Endothelial cell of umbilical vein (primary cell): ENCODE measurements at regions of chr1 and their contacts with region 1.

Region 1: DNA sequence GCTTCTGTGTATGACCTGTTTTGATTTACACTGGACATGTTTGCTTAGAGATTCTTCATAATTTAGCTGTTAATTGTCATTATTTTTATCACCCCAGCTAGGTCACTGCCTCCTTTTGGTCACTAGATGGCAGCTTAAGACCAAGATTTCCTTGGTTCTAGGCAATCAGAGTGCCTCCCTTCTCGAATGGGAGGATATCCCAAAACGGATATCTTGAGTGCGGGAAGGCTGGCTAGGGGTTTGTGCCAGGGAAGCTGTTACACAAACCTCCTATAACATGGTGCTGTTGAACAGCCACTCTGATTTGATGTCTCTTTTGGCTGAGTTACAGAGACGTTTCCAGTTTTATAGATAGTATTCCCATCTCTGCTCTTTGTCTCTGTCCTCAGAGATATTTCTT is 283.5 kb downstream of the S1PR1 start:
- DNase-seq: peak; percentile 57
- H3K4me3 ChIP-seq: no peak overlapping the region
- H3K27ac ChIP-seq: no peak overlapping the region
- H3K4me1 ChIP-seq: no peaks in the 10 kb centered on the region
- H3K27me3 ChIP-seq: peaks cover 2 to 3% of the 10 kb centered on the region in 2 experiments
- CTCF ChIP-seq: peak; percentile 62 to 71
- POLR2A ChIP-seq: no peak

Region 2: DNA sequence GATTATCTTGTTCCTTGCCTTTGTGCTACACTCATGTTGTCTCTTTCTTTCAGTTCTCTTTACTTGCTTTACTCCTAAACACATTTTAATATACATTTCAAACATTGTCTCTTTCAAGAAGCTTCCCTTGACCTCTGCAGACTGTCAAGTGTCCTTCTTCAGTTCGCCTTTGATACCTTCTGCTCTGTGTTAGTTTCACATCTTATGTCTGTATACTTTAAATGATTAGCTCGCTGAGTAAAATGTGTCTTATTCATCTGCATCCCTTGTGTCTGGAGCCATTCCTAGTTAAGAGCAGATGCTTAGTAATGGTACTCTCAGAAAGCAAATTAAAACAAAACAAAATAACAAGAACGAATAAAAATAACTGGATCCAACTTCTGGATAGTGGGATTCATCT is 19.9 kb after region 1 on chr1:
- CTCF ChIA-PET with region 1: interaction called, 14 read pairs
- POLR2A ChIA-PET with region 1: no interaction called
- dilution Hi-C with region 1: no loop called
- intact Hi-C with region 1: no loop called
- DNase-seq: no peak
- H3K4me3 ChIP-seq: no peak overlapping the region
- H3K27ac ChIP-seq: no peak overlapping the region
- H3K4me1 ChIP-seq: no peaks in the 10 kb centered on the region
- H3K27me3 ChIP-seq: peaks cover 3 to 4% of the 10 kb centered on the region in 2 experiments
- CTCF ChIP-seq: no peak
- POLR2A ChIP-seq: no peak

Region 3: GRCh38 chr1:101769520-101769919 is 249.2 kb after region 1 on chr1:
- CTCF ChIA-PET with region 1: interaction called, 3 read pairs
- POLR2A ChIA-PET with region 1: no interaction called
- dilution Hi-C with region 1: no loop called
- intact Hi-C with region 1: loop called (anchors 2 kb)
- DNase-seq: peak; percentile 32
- H3K4me3 ChIP-seq: no peak overlapping the region
- H3K27ac ChIP-seq: no peak overlapping the region
- H3K4me1 ChIP-seq: no peaks in the 10 kb centered on the region
- H3K27me3 ChIP-seq: peaks cover 0 to 3% of the 10 kb centered on the region in 2 experiments
- CTCF ChIP-seq: peak; percentile 27 to 40
- POLR2A ChIP-seq: no peak

Region 4: GRCh38 chr1:102434421-102434820 is 914.1 kb after region 1 on chr1:
- CTCF ChIA-PET with region 1: interaction called, 9 read pairs
- POLR2A ChIA-PET with region 1: no interaction called
- dilution Hi-C with region 1: no loop called
- intact Hi-C with region 1: loop called (anchors 1 kb)
- DNase-seq: peak; percentile 11
- H3K4me3 ChIP-seq: no peak overlapping the region
- H3K27ac ChIP-seq: no peak overlapping the region
- H3K4me1 ChIP-seq: no peaks in the 10 kb centered on the region
- H3K27me3 ChIP-seq: no peaks in the 10 kb centered on the region
- CTCF ChIP-seq: peak; percentile 45 to 53
- POLR2A ChIP-seq: no peak

Region 5: GRCh38 chr1:103461161-103462105 is 1941.1 kb after region 1 on chr1:
- CTCF ChIA-PET with region 1: interaction called, 46 read pairs
- POLR2A ChIA-PET with region 1: no interaction called
- dilution Hi-C with region 1: no loop called
- intact Hi-C with region 1: loop called (anchors 5 kb)
- DNase-seq: peak; percentile 18
- H3K4me3 ChIP-seq: no peak overlapping the region
- H3K27ac ChIP-seq: no peak overlapping the region
- H3K4me1 ChIP-seq: peaks cover 5% of the 10 kb centered on the region
- H3K27me3 ChIP-seq: no peaks in the 10 kb centered on the region
- CTCF ChIP-seq: peak; percentile 29
- POLR2A ChIP-seq: no peak